ENCODE measurements at regions of chr1 and their contacts with region 1.

Region 1: DNA sequence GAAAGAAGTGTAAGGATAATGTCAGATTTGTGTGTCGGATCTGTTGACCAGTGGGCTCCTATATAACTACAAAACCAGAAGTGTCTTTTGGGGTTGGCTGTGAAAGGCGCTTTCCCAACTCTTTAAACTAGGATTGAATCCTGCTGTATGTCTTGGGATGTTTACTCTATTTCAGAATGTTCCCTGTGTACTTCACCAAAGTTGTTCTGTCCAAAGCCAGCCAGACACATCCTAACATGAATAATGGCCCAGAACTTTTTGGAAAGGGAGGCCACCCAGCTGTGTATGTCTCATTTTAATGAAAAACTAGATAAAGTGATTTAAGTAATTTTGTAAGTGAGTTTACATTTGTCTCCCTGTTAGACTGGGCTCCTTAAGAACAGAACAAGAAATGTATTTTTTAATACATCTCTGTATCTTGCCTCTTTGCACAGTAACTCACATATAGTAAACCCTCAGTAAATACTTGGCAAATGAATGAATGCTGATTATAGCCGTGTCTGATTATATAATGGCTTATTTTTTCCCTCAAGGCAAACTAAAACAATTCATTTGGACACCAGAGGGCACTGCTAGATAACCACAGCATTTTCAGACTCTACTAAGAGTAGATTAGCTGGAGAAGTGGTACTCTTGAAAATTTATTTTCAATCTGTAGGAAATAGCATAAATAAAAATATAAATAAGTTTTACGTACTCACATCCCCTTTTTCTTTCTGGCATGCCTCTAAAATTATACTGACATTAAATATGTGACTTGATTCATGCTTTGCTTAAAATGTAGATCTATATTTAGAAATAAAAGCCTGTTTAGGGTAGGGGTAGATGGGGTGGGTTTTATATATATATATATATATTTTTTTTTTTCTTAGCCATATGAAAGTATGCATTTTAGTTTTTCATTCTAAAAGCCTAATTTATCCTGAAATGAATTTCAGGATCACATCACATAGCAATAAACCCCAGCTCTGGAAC is 23.8 kb downstream of the TSEN15 start:
- DNase-seq: no peak
- H3K4me3 ChIP-seq: no peak overlapping the region
- H3K27ac ChIP-seq: peak overlapping the region; percentile 73
- H3K4me1 ChIP-seq: peaks cover 29% of the 10 kb centered on the region
- H3K27me3 ChIP-seq: no peaks in the 10 kb centered on the region
- CTCF ChIP-seq: peak; percentile 85

Region 2: GRCh38 chr1:183859831-183860230 is 215.5 kb before region 1 on chr1:
- intact Hi-C with region 1: no loop called
- DNase-seq: no peak
- H3K4me3 ChIP-seq: no peak overlapping the region
- H3K27ac ChIP-seq: no peak overlapping the region
- H3K4me1 ChIP-seq: peaks cover 23% of the 10 kb centered on the region
- H3K27me3 ChIP-seq: no peaks in the 10 kb centered on the region
- CTCF ChIP-seq: no peak

Region 3: DNA sequence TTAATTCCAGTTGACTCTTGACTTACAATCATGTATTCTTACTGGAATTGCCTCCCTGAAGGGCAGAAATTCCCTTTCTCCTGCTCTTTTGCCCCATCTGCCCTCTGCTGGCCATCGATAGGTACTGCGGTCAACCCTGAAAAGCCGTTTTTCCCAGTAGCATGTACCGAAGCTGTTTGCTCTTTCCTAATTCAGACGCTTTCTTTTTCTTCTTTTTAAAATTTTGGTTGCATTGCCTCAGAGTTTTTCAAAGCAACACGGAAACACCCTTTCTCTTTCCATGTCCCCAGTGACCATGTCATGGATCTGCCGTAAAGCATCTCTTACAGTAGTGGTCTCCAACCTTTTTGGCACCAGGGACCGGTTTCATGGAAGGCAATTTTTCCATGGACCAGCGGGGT is 147.3 kb after region 1 on chr1:
- intact Hi-C with region 1: loop called (anchors 5 kb)
- DNase-seq: no peak
- H3K4me3 ChIP-seq: peak overlapping the region; percentile 55
- H3K27ac ChIP-seq: no peak overlapping the region
- H3K4me1 ChIP-seq: peaks cover 4% of the 10 kb centered on the region
- H3K27me3 ChIP-seq: no peaks in the 10 kb centered on the region
- CTCF ChIP-seq: peak; percentile 98

Region 4: DNA sequence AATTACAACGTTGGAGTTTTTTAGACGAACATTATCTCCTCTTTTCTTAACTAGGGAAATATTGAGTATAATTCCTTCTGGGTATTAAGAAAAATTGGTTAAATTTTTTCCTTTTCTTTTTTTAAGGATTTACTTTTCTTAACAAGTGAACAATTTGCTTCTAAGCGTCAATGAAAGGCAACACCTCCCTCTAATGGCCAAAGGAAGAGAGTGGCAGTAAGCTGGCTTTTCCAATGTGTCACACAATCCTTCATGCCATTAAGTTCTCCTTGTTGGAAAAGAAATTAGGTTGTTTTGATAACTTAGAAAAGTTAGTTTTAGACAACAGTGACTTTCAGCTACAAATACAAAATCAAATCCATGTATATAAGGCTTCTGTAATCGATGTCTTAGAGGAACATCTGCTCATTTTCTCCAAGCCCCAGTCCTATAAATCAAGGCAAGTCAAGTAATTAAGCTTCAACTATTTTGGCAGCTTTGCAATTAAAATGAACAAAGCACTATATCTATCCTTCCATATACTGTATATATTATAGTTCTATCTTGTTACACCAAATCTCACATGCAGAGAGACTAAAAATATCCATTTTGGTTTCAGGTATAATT is 616.5 kb after region 1 on chr1:
- intact Hi-C with region 1: loop called (anchors 10 kb)
- DNase-seq: no peak
- H3K4me3 ChIP-seq: no peak overlapping the region
- H3K27ac ChIP-seq: no peak overlapping the region
- H3K4me1 ChIP-seq: no peaks in the 10 kb centered on the region
- H3K27me3 ChIP-seq: no peaks in the 10 kb centered on the region
- CTCF ChIP-seq: peak; percentile 88

Measured in left ventricle myocardium inferior (tissue), 1 donor.